ENCODE measurements at regions of chr12 and their contacts with region 1.

Region 1: DNA sequence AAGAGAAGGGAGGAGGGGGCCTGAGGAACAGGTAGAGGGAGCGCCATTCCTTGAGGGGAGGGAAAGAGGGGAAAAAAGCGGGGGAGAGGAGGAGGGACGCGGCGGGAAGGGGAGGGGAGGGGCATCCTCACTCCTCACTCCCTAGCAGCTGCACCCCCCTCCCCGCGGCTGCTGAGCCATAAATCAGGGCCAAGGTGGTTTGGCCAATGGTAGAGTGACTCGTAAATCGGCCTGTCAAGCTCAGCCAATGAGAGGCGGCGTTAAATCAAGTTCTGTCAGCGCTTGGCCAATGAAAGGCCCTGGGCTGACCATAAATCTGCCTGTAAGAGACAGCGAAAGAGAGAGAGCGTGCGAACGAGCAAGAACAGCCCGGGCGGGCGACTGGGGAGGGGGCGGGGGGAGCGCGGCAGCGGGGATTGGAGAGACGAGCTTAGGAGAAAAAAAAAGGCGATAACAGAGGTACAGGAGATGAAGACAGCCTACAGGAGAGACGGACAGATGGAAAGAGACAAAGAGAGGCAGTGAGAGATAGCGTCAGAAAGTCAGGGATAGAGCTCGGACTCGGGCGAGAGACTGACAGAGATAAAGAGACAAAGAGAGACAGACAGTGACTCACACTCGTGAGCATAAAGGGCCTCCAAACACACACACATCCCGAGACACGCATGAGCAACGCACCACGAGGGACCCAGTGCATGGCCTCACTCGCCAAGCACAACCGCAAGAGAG is 5.1 kb downstream of the GPR84 start:
- DNase-seq: peak; percentile 94
- H3K4me3 Mint-ChIP-seq: no peak overlapping the region
- H3K27ac Mint-ChIP-seq: no peak overlapping the region
- H3K4me1 Mint-ChIP-seq: peaks cover 25% of the 10 kb centered on the region
- H3K27me3 Mint-ChIP-seq: no peaks in the 10 kb centered on the region

Region 2: GRCh38 chr12:54220092-54220557 is 139.1 kb before region 1 on chr12:
- intact Hi-C with region 1: loop called (anchors 2 kb)
- DNase-seq: peak; percentile 61
- H3K4me3 Mint-ChIP-seq: no peak overlapping the region
- H3K27ac Mint-ChIP-seq: no peak overlapping the region
- H3K4me1 Mint-ChIP-seq: peaks cover 18% of the 10 kb centered on the region
- H3K27me3 Mint-ChIP-seq: peaks cover 4% of the 10 kb centered on the region

Region 3: GRCh38 chr12:54294152-54294952 is 64.8 kb before region 1 on chr12:
- intact Hi-C with region 1: loop called (anchors 2 kb)
- DNase-seq: peak; percentile 55
- H3K4me3 Mint-ChIP-seq: no peak overlapping the region
- H3K27ac Mint-ChIP-seq: no peak overlapping the region
- H3K4me1 Mint-ChIP-seq: peaks cover 4% of the 10 kb centered on the region
- H3K27me3 Mint-ChIP-seq: peaks cover 18% of the 10 kb centered on the region

Region 4: DNA sequence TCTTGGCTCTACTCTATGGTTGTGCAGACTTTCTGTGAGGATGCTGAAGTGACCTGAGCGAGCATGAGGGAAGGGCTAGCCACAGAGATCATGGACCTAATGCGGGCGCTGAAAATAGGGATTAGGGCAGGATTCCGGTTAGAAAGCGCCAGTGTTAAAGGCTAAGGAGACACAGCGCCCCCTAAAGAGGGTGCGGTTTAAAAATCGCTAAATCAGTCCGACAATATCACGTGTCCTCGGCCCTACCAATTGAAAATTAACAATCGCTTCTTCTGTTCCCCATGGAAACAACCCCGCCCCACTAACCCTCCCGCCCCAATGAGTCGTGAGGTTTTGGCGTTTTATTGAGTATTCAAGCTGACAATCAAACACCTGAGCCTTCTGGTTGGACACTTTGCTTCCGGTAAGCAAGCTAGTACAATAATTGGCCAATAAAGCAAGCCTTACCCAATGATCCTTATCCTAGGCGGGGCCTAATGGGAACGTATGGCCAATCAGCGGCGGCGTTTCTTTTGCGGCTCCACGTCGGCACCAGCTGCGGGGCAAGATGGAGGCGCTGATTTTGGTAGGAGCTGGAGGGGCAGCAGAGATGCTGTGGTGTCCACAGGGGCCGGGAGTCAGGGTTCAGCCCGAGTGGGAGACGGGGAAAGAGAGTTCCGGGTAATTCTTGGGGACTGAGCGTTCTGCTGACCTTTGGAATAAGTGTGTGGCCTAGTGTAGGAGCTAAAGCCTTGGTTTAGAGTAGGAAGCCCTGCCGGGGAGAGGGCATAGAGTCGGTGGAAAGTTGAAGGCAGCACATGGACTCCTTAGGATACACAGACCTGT is 34.4 kb before region 1 on chr12 and contains the start of gene COPZ1:
- intact Hi-C with region 1: loop called (anchors 1 kb)
- DNase-seq: peak; percentile 92
- H3K4me3 Mint-ChIP-seq: peak within 1 kb of the TSS; percentile 100
- H3K27ac Mint-ChIP-seq: peak within 1 kb of the TSS; percentile 97
- H3K4me1 Mint-ChIP-seq: peaks cover 21% of the 10 kb centered on the region
- H3K27me3 Mint-ChIP-seq: no peaks in the 10 kb centered on the region
- total RNA-seq, gene COPZ1: 108 and 109 TPM in 2 replicates

Measured in activated T-helper 2 cell treated with anti-CD3 and anti-CD28 coated beads, Interferon-gamma antibody, Interleukin-2, Interleukin-4, amounts not matched to agents 10 μg/mL and 5 μg/mL and 100 μg/mL, durations not matched to agents 14 hours and 24 hours and 36 hours (primary cell).